Posterior cingulate gyrus (tissue), 11 donors: ENCODE measurements at regions of chr11 and their contacts with region 1.

Region 1: DNA sequence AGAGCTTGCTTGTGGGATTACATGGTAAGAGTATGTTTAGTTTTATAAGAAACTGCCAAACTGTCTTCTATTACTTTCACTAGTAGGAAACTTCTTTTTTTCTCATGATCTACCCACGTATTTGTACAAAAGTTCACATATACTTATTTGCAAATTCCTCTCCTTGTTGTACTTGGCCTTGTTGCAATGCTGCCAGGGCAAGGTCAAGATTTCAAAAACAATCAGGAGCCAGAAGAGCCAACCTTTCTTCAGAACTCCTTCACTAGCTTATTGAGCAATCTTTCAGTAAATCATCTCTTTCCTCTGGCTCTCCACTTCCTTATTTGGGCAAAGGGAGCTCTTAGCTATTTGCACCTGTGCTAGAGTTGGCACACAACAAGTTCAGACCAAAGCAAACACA is 9.7 kb downstream of the SRSF8 start:
- DNase-seq: no peak

Region 2: GRCh38 chr11:94602430-94603372 is 473.7 kb before region 1 on chr11:
- intact Hi-C with region 1: no loop called
- DNase-seq: peak in 6 of 10 donors; percentile 49 to 94 (median 64)

Region 3: GRCh38 chr11:95231127-95231880 is 154.9 kb after region 1 on chr11 and contains the start of gene SESN3:
- intact Hi-C with region 1: loop called (anchors 10 kb)
- DNase-seq: peak; percentile 94 to 100 (median 99)

Region 4: GRCh38 chr11:95279921-95280868 is 203.8 kb after region 1 on chr11:
- intact Hi-C with region 1: no loop called
- DNase-seq: peak in 8 of 10 donors; percentile 24 to 90 (median 56)

Region 5: DNA sequence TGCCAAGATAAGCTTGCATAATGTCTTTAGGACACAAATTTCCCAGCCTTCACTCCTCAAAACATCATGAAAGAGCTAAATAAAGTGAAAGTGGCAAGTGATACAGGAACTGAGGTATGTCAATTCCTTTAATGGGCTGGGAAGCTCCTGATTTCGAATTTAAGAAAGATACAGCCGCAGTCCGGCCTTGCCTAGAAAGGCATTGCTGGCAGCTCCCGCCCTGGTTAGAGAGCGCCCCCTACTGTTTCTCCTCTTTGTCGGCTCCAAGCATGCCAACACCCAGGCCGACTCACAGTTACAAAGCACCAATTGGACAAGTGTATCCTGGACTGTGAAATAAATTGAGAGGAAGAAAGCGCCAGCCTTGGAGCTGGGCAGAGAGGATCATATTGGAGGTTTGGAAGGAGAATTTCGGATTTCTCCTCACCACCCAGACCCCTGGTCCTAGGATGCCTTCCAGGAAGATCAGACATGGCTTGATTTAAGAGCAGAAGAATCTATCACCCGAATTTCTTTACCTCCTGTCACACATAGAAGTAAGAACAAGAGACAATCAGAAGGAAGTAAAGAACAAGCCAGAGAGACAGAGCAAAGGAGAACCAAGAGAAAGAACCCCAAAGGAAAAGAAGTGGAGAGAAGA is 629.2 kb after region 1 on chr11:
- intact Hi-C with region 1: loop called (anchors 5 kb)
- DNase-seq: peak; percentile 69 to 97 (median 88)